Endothelial cell of umbilical vein (primary cell): ENCODE measurements at regions of chr6 and their contacts with region 1.

Region 1: GRCh38 chr6:99467509-99468106 is 42.5 kb upstream of the PNISR start:
- DNase-seq: peak; percentile 28
- H3K4me3 ChIP-seq: no peak overlapping the region
- H3K27ac ChIP-seq: no peak overlapping the region
- H3K4me1 ChIP-seq: no peaks in the 10 kb centered on the region
- H3K27me3 ChIP-seq: no peaks in the 10 kb centered on the region
- CTCF ChIP-seq: peak; percentile 25 to 48
- POLR2A ChIP-seq: no peak

Region 2: GRCh38 chr6:99613409-99613704 is 145.7 kb after region 1 on chr6:
- CTCF ChIA-PET with region 1: interaction called, 7 read pairs
- POLR2A ChIA-PET with region 1: no interaction called
- dilution Hi-C with region 1: no loop called
- intact Hi-C with region 1: loop called (anchors 2 kb)
- DNase-seq: no peak
- H3K4me3 ChIP-seq: peak overlapping the region in 1 of 3 experiments; percentile 23
- H3K27ac ChIP-seq: no peak overlapping the region
- H3K4me1 ChIP-seq: peaks cover 6% of the 10 kb centered on the region
- H3K27me3 ChIP-seq: peaks cover 72 to 98% of the 10 kb centered on the region in 2 experiments
- CTCF ChIP-seq: peak; percentile 26 to 76
- POLR2A ChIP-seq: no peak

Region 3: DNA sequence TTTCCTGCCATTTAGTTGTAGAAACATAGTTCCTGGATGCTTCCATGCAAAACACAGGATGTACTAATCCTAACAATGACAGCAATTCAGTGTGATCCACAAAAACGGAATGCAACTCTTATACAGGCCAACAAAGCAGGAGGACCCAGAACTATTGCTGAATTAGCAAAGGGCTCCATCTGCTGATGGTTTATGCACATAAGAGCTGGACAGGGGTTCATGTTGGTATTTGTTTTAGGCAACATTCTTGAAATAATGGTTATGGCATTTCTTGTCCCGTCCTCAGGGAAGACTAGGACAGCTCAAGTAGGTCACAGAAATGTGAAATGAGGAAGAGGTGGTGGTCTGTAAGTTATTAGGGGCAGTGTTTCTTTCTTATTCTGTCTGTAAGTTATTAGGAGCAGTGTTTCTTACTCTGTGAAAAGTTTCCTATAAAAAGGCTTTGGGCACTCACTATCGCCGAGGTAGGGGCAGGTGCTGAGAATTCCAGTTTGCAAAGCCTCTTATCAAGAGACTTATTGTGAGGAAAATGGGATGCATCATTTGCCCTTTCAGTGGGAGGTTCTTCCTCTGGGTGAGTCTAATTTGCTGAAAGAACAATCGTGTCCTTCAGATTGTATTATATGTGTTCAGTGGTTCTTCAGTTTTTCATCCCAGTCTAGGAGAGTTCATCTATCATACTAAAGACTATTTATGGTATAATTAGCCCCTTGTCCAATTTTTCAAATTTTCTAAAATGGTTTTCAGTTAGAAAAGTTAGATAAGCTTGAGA is 355.3 kb after region 1 on chr6:
- CTCF ChIA-PET with region 1: interaction called, 4 read pairs
- POLR2A ChIA-PET with region 1: no interaction called
- dilution Hi-C with region 1: no loop called
- intact Hi-C with region 1: loop called (anchors 5 kb)
- DNase-seq: peak; percentile 49
- H3K4me3 ChIP-seq: no peak overlapping the region
- H3K27ac ChIP-seq: no peak overlapping the region
- H3K4me1 ChIP-seq: no peaks in the 10 kb centered on the region
- H3K27me3 ChIP-seq: peaks cover 0 to 3% of the 10 kb centered on the region in 2 experiments
- CTCF ChIP-seq: peak; percentile 9 to 14
- POLR2A ChIP-seq: no peak